ENCODE measurements at regions of chr11 and their contacts with region 1.

Region 1: DNA sequence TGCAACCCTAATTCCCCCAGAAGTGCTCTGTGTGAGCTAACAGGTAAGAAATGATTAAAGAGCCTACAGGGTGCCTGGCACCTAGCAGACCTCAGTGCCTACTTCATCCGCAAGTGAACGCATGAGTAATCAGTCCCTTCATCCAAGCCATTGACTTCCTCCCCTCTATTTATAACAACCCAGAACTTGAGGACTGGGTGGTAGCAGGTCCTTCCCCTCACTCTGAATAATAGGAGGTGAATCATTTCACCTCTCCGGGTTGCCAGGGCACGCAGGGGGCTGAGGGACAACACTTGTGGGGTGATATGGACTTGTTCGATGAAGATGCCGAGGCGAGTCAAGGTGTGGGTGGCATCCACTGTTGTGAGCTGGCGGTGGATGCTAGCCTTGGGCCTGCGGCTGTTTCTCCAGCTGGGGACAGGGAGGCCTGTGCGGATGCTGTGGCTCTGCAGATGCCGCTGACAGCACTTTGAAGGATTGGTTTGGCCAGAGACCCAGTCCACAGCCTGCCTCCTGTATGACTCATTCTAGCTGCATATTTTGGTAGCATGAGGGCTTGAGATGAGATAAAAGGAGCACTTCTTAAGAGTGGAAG is 11.7 kb upstream of the SORL1-AS1 start:
- DNase-seq: peak; percentile 66
- H3K4me3 ChIP-seq: peak overlapping the region; percentile 30
- H3K27ac ChIP-seq: peak overlapping the region; percentile 70
- H3K4me1 ChIP-seq: peaks cover 99% of the 10 kb centered on the region
- CTCF ChIP-seq: no peak

Region 2: GRCh38 chr11:121482231-121483129 is 18.0 kb after region 1 on chr11:
- CTCF ChIA-PET with region 1: no interaction called
- POLR2A ChIA-PET with region 1: interaction called, 10 read pairs
- intact Hi-C with region 1: no loop called
- DNase-seq: peak; percentile 75
- H3K4me3 ChIP-seq: peak overlapping the region; percentile 38
- H3K27ac ChIP-seq: peak overlapping the region; percentile 79
- H3K4me1 ChIP-seq: peaks cover 42% of the 10 kb centered on the region
- CTCF ChIP-seq: no peak